ENCODE measurements at regions of chr16 and their contacts with region 1.

Region 1: DNA sequence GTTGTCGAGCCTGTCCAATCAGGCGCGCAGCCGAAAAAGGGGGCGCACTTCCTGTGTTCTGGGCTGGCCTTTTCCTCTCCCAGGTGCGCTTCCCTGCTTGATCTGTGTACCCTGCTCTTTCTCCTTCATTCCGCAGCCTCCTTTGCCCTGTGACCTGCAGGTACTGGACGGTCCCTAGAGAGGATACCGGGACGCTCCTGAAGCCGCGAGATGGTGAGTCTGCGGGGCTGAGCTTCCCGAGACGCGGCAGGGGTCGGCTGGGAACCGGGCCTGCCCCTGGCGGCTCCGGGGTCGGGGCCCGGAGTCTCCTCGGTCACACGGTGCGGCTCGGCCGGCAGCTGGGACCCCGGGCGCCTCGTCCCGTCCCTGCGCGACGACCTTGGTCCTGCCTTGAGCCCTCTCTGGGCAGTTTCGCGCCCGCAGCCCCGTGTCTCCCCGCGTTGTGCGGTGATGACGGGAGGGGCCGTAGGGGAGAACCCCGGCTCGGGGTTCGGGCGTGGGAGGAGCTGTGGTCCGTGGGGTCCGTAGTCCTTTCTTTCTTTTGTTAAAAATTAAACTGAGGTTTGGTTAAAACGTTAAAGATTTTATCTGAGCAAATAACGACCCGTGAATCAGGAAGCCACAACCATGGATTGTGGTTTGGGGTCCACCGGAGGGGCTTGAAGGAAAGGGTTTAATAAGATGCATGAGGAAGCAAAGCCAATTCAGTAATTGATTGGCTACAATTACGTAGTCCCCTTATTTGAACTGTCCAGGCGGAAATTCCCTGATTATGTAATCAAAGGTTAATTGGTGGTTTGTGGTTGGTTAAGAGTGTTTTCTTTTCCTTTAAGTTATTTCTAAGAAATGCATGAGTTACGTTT is 172.8 kb upstream of the ZNF267 start:
- DNase-seq: peak; percentile 71 to 95 (median 76)
- H3K4me3 ChIP-seq: peak overlapping the region in 3 of 4 donors; percentile 19 to 87 (median 70)
- H3K27ac ChIP-seq: peak overlapping the region in 2 of 5 donors; percentile 8 to 48
- H3K4me1 ChIP-seq: peaks cover 8 to 9% of the 10 kb centered on the region in 2 donors
- H3K27me3 ChIP-seq: no peaks in the 10 kb centered on the region
- CTCF ChIP-seq: no peak
- POLR2A ChIP-seq: no peak

Region 2: GRCh38 chr16:31472709-31473203 is 228.0 kb before region 1 on chr16:
- intact Hi-C with region 1: loop called in 1 of 2 experiments (anchors 10 kb)
- DNase-seq: peak; percentile 88 to 97 (median 94)
- H3K4me3 ChIP-seq: peak overlapping the region in 2 of 4 donors; percentile 46 to 77
- H3K27ac ChIP-seq: peak overlapping the region; percentile 50 to 95 (median 69)
- H3K4me1 ChIP-seq: peaks cover 0 to 13% of the 10 kb centered on the region in 2 donors
- H3K27me3 ChIP-seq: no peaks in the 10 kb centered on the region
- CTCF ChIP-seq: peak; percentile 53 to 94 (median 76)
- POLR2A ChIP-seq: no peak

Region 3: DNA sequence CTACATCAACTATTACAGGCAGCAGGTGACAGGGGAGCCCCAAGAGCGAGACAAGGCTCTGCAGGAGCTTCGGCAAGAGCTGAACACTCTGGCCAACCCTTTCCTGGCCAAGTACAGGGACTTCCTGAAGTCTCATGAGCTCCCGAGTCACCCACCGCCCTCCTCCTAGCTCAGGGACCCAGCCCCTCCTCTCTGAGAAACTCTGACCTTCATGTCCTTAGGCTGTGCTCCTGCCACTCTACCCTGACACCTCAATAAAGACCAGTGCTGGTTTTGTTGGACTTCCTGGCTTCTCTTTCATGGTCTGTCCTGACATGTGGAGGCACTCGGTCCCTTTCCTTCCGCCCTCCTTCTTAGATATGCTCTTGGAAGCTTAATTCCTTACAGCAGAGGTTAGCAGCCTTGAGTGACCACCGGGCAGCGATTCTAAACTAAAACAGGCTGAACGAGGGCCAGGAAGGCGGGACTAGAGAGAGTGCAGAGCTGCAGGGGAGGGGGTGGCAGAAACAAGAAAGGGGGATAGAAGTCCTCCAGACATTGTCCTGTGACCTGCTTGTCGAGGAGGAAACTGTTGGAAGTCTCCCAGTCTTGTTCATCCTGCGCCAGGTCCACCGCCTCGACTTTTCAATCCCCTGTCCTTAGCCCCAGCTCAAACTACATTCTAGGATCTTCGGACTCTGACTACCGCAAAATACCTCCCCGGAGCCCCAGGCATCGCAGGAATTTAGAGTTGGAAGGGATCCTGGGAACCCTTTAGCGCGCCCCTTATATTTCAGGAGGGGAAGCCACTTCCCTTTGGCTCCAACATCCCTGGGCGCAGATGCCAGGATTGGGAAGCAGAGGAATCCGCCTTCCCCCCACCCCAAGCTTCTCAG is 172.0 kb before region 1 on chr16:
- intact Hi-C with region 1: no loop called
- DNase-seq: no peak
- H3K4me3 ChIP-seq: peak overlapping the region in 1 of 4 donors; percentile 19
- H3K27ac ChIP-seq: no peak overlapping the region
- H3K4me1 ChIP-seq: no peaks in the 10 kb centered on the region
- H3K27me3 ChIP-seq: peaks cover 9% of the 10 kb centered on the region
- CTCF ChIP-seq: no peak
- POLR2A ChIP-seq: no peak

Region 4: DNA sequence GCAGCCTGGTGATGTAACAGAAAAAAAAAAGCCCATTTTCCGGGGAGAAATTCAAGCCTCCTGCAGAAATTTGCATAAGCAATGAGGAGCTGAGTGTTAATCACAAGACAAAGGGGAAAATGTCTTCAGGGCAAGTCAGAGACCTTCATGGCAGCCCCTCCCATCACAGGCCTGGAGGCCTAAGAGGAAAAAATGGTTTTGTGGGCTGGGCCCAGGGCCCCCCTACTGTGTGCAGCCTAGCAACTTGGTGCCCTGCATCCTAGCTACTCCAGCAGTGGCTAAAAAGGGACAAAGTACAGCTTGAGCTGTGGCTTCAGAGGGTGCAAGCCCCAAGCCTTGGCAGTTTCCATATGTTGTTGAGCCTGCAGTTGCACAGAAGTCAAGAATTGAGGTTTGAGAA is 123.3 kb before region 1 on chr16:
- intact Hi-C with region 1: no loop called
- DNase-seq: no peak
- H3K4me3 ChIP-seq: no peak overlapping the region
- H3K27ac ChIP-seq: no peak overlapping the region
- H3K4me1 ChIP-seq: no peaks in the 10 kb centered on the region
- H3K27me3 ChIP-seq: no peaks in the 10 kb centered on the region
- CTCF ChIP-seq: no peak
- POLR2A ChIP-seq: no peak

Region 5: DNA sequence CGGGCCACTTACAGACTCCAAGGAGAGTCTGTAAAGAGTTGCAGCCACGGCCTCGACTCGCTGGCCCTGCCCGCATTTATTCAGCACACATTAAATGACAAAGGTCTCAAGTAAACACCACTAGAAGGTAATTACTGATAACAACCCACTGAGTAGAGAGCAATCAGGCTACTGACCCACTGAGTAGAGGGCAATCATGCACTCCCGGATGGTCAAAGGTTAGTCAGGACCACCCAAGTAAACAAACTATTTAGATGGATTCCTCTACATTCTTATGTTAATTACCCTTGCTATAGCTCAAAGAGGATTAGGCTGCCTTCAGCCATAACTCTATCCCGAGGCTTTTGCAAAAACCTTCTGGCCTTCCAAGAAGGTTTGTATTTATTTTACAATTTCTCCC is 142.1 kb after region 1 on chr16:
- intact Hi-C with region 1: no loop called
- DNase-seq: no peak
- H3K4me3 ChIP-seq: no peak overlapping the region
- H3K27ac ChIP-seq: no peak overlapping the region
- H3K4me1 ChIP-seq: no peaks in the 10 kb centered on the region
- H3K27me3 ChIP-seq: no peaks in the 10 kb centered on the region
- CTCF ChIP-seq: no peak
- POLR2A ChIP-seq: no peak

Measured in adrenal gland (tissue), 19 donors.